Panc1 (cell line): ENCODE measurements at regions of chr3 and their contacts with region 1.

Region 1: DNA sequence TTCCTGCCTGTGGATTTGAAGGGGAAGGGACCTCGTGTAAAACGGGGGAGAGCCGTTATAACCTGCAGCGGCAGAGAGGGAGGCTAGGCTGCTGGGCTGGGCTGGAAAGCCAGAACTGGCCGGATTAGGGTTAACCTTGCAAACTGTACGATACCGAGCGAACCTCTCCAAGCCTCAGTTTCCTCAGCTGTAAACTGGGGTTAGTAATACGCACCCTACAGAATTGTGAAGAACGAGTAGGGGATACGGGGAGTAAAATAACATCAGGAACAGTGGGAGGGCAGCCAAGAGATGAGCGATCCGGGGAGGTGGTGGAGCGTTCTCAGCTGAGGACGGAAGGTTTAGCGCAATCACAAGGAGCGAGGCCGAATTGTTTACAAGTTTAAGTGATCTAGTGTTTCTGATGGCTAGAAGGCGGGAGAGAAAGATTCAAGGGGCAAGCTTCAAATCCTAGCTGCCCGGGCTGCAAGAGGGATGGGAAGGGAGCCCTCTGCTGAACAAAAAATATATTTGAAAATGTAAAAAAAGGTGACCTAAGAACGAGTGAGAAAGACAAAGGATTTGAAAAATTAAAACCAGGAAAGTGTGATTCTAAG is 768 bp upstream of the SEMA5B start:
- DNase-seq: peak; percentile 20
- ATAC-seq: peak; percentile 55
- H3K4me3 ChIP-seq: peak overlapping the region; percentile 37 to 64
- H3K27ac ChIP-seq: no peak overlapping the region
- H3K4me1 ChIP-seq: no peaks in the 10 kb centered on the region; the same call in 1 of the 2 replicates
- H3K27me3 ChIP-seq: peaks cover 53% of the 10 kb centered on the region
- CTCF ChIP-seq: peak; percentile 36

Region 2: DNA sequence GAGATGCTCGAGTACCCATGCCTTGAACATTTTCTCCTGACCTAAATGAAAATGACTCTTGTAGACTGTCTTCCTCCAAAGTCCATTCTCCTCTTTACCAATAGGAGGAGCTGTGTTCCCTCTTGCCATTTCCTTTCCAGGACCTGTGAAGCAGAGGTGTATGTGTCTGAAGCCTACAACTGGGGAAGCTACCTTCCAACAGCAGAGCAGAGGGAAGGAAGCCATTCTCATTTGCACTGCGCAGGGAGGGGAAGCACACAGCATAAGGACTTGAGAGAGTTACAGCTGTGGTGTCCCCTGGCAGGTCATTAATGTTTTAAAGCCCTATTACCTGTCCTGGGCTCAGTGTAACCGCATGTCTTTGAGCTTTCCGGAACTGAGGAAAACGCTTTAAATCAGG is 273.4 kb before region 1 on chr3:
- CTCF ChIA-PET with region 1: interaction called, 3 read pairs
- POLR2A ChIA-PET with region 1: no interaction called
- in situ Hi-C with region 1: no loop called
- intact Hi-C with region 1: loop called (anchors 10 kb)
- DNase-seq: peak; percentile 36
- ATAC-seq: peak; percentile 93
- H3K4me3 ChIP-seq: no peak overlapping the region
- H3K27ac ChIP-seq: no peak overlapping the region
- H3K4me1 ChIP-seq: no peaks in the 10 kb centered on the region
- H3K27me3 ChIP-seq: no peaks in the 10 kb centered on the region
- CTCF ChIP-seq: peak; percentile 90

Region 3: GRCh38 chr3:122858373-122858772 is 170.0 kb before region 1 on chr3:
- CTCF ChIA-PET with region 1: interaction called, 5 read pairs
- POLR2A ChIA-PET with region 1: no interaction called
- in situ Hi-C with region 1: no loop called
- intact Hi-C with region 1: loop called (anchors 5 kb)
- DNase-seq: peak; percentile 17
- ATAC-seq: no peak
- H3K4me3 ChIP-seq: no peak overlapping the region
- H3K27ac ChIP-seq: no peak overlapping the region
- H3K4me1 ChIP-seq: no peaks in the 10 kb centered on the region
- H3K27me3 ChIP-seq: no peaks in the 10 kb centered on the region
- CTCF ChIP-seq: peak; percentile 62; the same call in 1 of the 2 replicates

Region 4: DNA sequence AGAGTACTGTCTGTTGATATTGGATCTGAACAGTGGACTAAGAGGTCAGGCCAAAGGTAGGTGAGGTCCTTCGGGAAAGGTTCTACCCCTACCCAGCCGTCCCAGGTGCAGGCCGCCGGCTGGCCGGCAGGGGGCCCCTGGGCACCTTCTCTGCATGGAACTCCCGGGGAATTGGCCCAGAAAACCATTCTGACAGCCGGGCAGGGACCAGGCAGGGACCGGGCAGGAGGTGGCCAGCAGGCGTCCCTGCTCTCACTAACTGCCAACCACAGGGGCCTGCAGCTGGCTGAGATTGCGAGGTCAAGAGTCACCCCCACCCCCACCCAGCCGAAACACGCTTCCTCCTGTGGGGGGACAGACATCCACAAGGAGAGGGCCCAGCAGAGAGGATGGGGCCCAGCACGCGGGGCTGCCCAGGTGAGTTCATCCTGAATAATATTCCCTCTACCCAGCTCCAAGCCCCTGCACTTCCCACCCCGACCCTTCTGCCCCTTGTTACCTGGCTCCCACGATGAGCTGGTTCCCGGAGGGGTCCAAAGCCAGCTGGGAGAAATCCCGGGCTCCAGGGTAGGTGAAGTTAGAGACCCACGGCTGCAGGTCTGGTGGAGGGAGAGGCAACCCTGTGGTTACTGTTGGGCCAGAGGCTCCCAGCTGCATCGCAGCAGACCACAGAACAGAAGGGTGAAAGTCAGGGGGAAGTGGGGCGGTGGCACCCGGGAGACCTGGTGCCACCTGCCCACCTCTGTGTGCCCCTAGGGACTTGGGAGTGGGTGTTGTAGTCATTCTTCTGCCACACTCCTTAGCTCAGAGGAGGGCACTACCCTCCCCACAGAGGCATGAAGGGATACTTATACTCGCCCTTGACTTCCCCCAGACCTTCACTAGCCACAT is 85.1 kb before region 1 on chr3:
- CTCF ChIA-PET with region 1: interaction called, 7 read pairs
- POLR2A ChIA-PET with region 1: no interaction called
- in situ Hi-C with region 1: no loop called
- intact Hi-C with region 1: loop called (anchors 1 kb)
- DNase-seq: peak; percentile 13
- ATAC-seq: peak; percentile 97
- H3K4me3 ChIP-seq: no peak overlapping the region
- H3K27ac ChIP-seq: no peak overlapping the region
- H3K4me1 ChIP-seq: no peaks in the 10 kb centered on the region
- H3K27me3 ChIP-seq: no peaks in the 10 kb centered on the region
- CTCF ChIP-seq: peak; percentile 99

Region 5: DNA sequence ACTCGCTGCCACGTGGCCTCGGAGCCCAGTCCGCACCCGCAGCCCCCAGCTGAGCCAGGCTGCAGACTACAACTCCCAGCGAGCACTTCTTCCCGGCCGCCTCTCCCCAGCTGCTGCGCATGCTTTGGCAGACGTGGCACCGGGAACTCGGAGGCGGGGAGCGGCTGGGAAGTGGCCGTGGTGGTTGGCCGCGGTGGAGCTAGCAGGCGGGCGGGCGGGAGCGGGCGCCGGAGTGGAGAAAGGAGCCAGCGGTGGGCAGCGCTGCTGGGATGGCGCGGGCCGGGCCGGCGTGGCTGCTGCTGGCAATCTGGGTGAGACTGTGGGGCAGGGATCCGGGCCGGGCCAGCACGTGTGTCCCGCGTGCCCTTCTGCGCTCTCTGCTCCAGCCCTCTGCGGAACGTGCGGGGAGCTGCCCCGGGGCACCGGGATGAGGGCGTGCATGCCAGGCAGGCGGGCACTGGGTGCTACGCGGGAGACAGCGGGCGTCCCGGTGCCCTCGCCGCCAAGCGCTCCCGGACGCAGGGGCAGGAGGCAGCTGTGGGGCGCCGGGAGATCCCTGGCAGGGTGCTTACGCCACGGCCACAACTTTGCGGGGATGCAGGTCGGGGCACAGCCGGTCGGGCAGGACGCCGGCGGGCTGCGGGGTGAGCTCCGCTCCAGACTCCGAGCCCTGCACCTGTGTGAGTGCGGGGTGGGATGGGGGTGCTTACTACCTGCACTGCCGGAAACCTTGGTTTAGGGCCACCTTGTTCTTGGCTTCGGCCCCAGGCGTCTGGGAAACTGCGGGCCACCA is 38.8 kb after region 1 on chr3 and contains the start of gene PDIA5:
- CTCF ChIA-PET with region 1: interaction called, 10 read pairs
- POLR2A ChIA-PET with region 1: no interaction called
- in situ Hi-C with region 1: no loop called
- intact Hi-C with region 1: no loop called
- DNase-seq: peak; percentile 46
- ATAC-seq: peak; percentile 96
- H3K4me3 ChIP-seq: peak within 1 kb of the TSS; percentile 84 to 92
- H3K27ac ChIP-seq: peak within 1 kb of the TSS; percentile 83
- H3K4me1 ChIP-seq: peaks cover 32% of the 10 kb centered on the region
- H3K27me3 ChIP-seq: no peaks in the 10 kb centered on the region
- CTCF ChIP-seq: no peak
- total RNA-seq, gene PDIA5: 53.6 TPM

Region 6: GRCh38 chr3:123218990-123219389 is 190.7 kb after region 1 on chr3:
- CTCF ChIA-PET with region 1: no interaction called
- POLR2A ChIA-PET with region 1: interaction called, 12 read pairs
- in situ Hi-C with region 1: no loop called
- intact Hi-C with region 1: no loop called
- DNase-seq: no peak
- ATAC-seq: no peak
- H3K4me3 ChIP-seq: no peak overlapping the region
- H3K27ac ChIP-seq: no peak overlapping the region
- H3K4me1 ChIP-seq: no peaks in the 10 kb centered on the region
- H3K27me3 ChIP-seq: no peaks in the 10 kb centered on the region
- CTCF ChIP-seq: no peak

Region 7: DNA sequence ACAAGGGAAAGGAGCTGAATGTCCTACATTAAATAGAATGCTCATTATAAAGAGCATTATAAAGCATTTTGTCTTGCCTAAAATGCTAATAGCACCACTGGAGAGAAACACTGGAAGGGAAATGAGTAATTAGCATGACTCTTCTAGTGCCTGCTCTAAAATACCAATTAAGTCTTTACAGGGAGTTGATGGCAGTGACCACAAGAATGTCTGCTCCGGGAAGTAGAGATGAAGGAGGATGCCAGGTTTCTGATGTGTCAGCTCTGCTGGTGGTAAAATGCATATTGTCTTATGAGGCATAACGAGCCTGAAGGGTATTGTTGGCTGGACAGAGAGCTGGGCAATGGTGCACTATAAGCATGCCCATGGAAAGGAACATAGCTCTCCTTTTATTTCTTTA is 806.3 kb after region 1 on chr3:
- CTCF ChIA-PET with region 1: no interaction called
- POLR2A ChIA-PET with region 1: no interaction called
- in situ Hi-C with region 1: no loop called
- intact Hi-C with region 1: no loop called
- DNase-seq: peak; percentile 69
- ATAC-seq: peak; percentile 73
- H3K4me3 ChIP-seq: no peak overlapping the region
- H3K27ac ChIP-seq: no peak overlapping the region
- H3K4me1 ChIP-seq: no peaks in the 10 kb centered on the region
- H3K27me3 ChIP-seq: no peaks in the 10 kb centered on the region
- CTCF ChIP-seq: no peak